ENCODE measurements at regions of chr12 and their contacts with region 1.

Region 1: GRCh38 chr12:111024205-111024801 is 103.9 kb upstream of the MYL2 start:
- DNase-seq: no peak
- H3K4me3 ChIP-seq: no peak overlapping the region
- CTCF ChIP-seq: peak; percentile 68

Region 2: DNA sequence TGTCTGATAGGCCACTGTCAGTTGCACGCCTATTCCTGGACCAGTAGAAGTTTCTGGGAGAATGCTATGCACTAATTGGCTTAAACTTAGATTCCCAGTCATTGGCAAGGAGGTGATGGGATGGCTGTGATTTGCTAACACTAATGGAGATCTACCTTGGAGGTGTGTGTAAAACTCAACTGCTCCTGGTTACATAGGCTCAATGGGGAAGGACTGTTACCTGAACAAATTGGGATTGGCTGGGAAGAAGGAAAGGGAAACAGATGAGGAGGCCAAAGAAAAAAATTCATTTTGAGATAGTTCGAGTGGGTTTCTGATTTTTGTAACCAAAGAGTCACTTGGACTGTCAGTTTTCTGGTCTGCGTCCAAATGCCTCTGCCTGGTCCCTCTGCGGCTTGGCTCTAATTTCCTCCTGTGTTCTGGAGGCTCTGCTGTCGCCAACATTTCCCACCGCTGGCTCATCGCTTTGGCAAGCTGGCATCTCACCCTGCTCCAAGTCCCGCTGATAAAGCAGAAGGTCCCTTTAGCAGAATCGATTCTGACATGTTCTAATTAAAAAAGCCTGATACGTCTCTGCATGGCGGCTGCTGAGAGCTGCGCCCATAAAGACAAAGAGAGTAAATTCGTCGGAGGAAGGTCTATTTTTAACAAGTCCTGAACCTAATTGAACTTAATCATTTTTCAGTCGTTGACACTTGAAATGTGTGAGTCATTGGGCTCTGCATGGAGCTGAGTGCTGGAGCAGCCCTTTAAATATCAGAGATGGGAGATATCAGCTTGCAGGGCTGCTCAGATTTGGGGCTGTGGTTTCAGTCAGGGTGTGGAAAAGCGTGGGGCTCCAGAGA is 179.5 kb before region 1 on chr12:
- CTCF ChIA-PET with region 1: no interaction called
- POLR2A ChIA-PET with region 1: no interaction called
- DNase-seq: no peak
- H3K4me3 ChIP-seq: no peak overlapping the region
- CTCF ChIP-seq: no peak

Region 3: DNA sequence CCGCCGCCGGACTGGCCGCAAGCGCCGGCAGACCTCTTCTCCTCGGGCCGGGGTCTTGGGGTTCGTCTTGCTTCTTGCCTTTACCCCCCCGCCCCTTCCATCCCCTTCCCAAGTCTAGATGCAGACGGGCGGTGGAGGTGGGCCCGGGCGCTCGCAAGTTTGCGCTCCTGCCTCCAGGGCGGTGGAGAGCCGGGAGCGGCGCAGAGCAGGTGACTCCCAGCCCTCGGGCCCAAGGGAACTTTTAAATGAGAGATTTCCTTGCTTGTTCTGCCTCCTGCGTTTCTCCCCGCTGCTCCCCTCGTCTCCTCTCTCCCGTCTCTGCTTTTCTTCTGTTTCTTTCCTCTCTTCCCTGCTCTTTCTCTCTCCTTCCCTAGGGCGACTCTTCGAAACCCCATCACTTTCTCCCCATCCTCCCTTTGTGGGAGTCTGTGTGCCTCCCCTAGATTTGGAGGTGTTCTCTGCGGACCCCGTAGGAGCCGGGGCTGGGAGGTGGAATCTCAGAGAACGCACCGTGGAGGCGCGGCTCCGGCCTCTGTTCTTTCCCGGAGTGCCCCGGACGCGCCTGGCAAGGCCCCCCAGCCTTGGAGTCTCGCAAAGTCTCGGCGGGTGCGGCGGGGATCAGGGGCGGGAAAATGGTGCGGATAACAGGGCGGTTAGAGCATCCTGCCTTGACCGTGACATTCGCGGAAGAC is 10.7 kb after region 1 on chr12:
- CTCF ChIA-PET with region 1: no interaction called
- POLR2A ChIA-PET with region 1: no interaction called
- DNase-seq: no peak
- H3K4me3 ChIP-seq: no peak overlapping the region
- CTCF ChIP-seq: no peak

Region 4: DNA sequence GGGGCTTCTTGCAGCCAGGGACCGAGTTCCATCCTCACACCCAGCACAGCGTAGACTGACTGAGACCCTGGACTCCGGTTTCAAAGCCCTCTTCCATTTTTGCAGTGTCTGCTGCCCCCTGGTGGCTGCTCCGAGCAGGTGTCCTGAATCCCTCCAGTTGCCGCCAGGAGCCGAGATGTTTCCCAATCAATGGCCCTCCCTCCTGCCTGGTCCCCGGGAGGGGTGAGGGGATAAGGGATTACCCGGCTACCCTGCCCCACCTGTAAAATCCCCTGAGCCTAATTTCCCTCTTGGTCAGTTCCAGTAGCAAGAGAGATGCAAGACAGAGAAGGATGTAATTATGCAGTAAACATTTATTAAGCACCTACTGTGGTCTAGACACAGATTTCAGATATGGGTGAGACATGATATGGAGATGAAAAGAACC is 289.5 kb after region 1 on chr12:
- CTCF ChIA-PET with region 1: interaction called, 16 read pairs
- POLR2A ChIA-PET with region 1: no interaction called
- DNase-seq: no peak
- H3K4me3 ChIP-seq: no peak overlapping the region
- CTCF ChIP-seq: peak; percentile 90

Measured in AG04449 (cell line).